GM10248 (cell line): ENCODE measurements at regions of chr17 and their contacts with region 1.

Region 1: DNA sequence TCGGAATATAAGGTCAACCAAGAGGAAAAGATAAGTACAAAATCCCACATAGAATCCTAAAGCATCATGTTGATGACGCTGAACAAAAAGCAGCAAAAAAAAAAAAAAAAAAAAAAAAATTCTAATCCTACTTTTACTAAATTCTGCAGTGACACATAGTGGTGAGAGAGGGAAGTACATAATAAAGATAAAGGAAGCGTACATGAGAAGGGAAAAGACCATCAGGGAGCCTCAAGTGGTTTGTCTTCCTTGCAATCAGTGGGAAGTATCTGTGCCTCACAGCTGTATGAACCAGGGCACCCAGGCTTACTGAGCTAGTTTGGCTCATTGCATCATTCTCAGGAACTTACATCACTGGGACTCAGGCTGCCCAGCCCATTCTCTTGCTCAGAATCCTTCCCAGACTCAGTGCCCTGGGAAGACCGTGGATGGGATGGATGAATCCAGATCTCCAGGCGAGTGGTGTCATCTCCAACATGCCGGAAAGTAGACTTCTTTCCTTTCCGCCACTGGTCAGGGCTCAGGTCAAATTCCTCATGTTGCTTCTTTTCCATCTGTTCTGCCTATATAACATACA is 21.2 kb downstream of the SMG6 start:
- DNase-seq: peak; percentile 61
- CTCF ChIP-seq: peak; percentile 43

Region 2: DNA sequence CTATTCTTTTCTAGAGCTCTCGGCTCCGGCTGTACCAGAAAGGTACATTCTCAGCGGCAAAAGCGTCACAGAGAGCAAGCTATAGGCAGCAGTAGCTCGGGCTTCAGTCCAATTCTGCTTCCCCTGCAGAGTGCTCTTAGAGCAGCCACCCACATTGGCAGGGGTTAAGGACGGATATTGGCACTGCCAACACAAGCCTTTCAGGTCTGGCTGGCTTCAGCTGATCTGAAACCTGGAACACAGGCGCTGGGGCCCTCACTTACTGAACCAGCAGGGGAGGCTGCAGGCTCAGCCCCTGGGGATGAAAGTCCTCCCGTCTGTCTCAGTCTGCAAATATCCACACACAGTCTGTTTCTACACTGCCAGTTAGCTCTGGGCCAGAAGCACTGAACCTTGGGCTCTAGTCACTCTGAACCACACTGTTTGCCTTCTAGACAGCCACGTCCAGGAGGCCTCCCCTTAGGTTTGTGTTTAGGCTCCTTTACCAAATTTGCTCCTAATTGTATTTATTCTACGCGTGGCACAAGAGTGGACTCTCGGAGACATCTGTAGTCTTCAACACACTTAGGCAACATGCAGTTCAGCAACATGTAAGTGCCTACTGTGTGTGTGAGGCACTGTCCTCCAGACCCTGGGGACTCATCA is 187.4 kb before region 1 on chr17:
- CTCF ChIA-PET with region 1: interaction called, 10 read pairs
- POLR2A ChIA-PET with region 1: no interaction called
- DNase-seq: peak; percentile 43
- CTCF ChIP-seq: peak; percentile 55

Region 3: DNA sequence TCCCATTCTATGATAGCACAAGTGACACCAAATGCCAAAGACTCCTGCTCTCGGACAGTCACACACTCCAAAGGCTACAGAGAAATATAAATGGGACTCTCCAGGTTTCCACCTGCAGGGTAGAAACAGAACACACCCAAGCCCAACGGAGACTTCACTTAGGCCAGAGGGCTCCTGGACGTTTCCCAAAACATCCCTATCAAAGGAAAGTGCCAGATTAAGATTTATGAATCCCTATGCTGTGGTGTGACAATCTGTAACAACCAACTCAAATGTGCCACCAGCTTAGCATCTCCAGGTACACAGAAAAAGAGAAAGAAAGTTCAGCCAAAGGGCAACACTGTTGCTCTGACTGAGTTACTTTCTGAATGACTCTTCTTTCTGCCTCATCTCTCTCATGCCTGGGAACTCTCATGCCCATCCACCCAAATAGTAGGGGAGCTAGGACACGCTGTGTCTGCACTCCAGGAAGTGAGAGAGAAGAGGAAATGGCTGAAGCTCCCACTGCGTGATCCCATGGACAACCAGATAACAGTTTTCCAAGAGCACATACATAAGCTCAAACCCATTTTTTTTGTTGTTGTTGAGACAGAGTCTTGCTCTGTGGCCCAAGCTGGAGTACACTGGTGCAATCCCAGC is 28.5 kb before region 1 on chr17:
- CTCF ChIA-PET with region 1: interaction called, 11 read pairs
- POLR2A ChIA-PET with region 1: interaction called, 4 read pairs
- DNase-seq: peak; percentile 81
- CTCF ChIP-seq: no peak

Region 4: DNA sequence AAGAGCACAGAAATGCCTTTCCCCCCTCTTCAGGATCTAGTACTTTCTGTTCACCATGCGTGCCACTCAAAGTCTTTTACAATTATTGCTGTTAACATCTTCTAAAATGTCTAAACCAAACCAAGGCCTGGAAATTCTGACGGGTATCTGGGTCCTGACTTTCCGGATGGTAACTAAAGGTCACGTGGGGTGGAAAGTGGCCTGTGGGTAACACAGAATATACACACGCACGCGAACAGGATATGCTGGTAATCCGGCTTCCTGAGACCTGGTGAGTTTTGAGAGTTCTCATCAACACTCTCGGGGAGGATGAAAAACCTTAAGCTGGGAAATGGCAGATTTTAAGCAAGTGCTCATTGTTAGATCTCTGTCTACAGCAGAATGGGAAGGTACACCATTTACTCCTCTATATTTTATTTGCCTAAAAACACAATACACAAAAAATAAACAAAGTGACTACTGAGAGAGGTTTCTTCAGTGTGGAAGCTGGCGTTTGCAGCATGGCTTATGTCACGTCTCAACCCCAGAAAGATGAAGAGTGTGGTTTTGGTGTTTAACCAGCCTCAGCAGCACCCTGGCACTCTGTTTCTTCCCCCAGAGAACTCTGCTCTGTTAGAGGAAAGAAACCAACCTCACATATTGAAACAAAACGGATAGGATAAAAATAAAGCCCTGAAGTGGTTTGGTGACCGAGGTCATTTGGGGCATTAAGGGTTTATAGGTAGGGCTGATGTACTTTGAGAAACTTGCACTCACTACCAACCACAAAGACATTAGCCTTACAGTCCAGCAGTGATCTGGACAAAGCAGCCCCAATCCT is 16.1 kb before region 1 on chr17:
- CTCF ChIA-PET with region 1: interaction called, 25 read pairs
- POLR2A ChIA-PET with region 1: no interaction called
- DNase-seq: peak; percentile 55
- CTCF ChIP-seq: no peak

Region 5: DNA sequence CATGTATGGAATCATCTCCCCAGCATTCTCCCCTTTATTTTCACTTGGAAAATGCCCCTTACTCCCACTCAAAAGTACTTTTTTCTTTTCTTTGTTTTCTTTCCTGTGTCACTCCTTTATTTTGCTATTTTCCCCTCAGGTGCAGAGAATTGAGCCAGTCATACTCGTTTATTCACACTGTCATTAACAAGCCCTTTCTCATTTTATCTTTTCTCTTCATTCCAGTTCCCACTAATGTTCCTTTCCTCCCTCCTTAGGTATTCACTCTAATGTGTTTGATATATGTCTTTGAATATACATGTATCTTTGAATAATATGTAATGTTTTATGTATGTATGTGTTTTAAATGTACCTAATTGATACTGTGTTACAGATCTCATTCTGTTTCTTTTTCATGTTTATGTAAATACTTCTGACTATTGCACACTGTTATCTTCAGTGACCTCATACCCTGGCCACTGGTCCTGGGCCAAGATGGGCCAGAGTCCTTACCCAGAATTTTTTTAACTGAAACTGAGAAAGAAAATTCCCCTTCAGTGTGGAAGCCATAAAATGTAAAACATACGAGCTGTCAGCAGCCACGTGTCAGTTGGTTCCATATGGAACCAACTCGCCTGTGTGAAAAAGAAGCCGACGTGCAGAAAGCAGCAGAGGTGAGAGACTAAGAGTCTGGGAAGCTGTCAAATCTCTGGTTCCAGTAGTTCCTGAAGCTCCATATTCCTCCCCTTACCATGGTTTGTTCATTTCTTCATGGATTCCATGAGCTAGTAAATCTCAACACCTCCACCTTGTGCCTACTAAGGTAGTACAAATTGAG is 27.2 kb after region 1 on chr17:
- CTCF ChIA-PET with region 1: no interaction called
- POLR2A ChIA-PET with region 1: no interaction called
- DNase-seq: no peak
- CTCF ChIP-seq: no peak